ENCODE measurements at regions of chr13 and their contacts with region 1.

Region 1: DNA sequence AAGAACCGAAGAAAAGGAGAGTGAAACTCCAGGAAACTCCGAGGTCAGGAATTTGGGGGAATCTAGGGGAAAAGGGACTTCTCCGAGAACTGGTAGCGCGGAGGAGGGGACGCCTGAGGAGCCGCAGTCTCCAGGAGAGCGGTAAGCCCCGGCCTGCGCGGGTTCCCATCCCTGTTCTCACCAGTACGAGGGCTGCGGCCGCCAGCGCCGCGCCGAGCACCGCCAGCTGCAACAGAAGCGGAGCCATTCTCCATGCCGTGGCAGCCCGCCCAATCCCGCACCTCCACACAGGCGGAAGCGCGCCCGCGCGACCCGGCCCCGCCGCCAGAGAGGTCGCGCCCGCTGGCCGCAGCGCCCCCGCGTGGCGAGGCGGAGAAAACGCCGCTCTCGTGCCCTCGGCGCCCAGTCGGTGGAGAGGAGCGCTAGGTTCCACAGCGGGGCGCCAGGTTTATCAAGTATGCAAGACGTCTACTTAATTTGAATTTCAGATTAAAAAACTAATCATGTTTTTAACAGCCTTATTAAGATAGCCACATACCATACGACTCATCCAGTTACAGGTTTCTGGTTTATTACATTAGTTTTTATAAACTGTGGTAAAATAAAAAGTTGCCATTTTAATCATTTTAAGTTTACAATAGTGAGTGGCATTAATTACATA is at the start of gene ALG5:
- DNase-seq: peak; percentile 93 to 96
- ATAC-seq: peak; percentile 88 to 92 (median 90)
- H3K4me3 ChIP-seq: peak within 1 kb of the TSS; percentile 94
- H3K27ac ChIP-seq: peak within 1 kb of the TSS; percentile 86
- H3K4me1 ChIP-seq: peaks cover 19% of the 10 kb centered on the region
- H3K27me3 ChIP-seq: no peaks in the 10 kb centered on the region
- CTCF ChIP-seq: peak; percentile 98
- total RNA-seq, gene ALG5: 9.1 to 14.6 (median 11.0) TPM

Region 2: GRCh38 chr13:36530050-36530789 is 469.0 kb before region 1 on chr13:
- intact Hi-C with region 1: no loop called
- DNase-seq: no peak
- ATAC-seq: no peak
- H3K4me3 ChIP-seq: no peak overlapping the region
- H3K27ac ChIP-seq: no peak overlapping the region
- H3K4me1 ChIP-seq: no peaks in the 10 kb centered on the region
- H3K27me3 ChIP-seq: no peaks in the 10 kb centered on the region
- CTCF ChIP-seq: no peak

Region 3: GRCh38 chr13:36919833-36920615 is 79.2 kb before region 1 on chr13 and contains the start of gene SMAD9:
- intact Hi-C with region 1: loop called in 1 of 2 experiments (anchors 2 kb)
- DNase-seq: peak; percentile 86 to 87
- ATAC-seq: peak; percentile 75 to 82 (median 77)
- H3K4me3 ChIP-seq: peak within 1 kb of the TSS; percentile 84
- H3K27ac ChIP-seq: peak within 1 kb of the TSS; percentile 72
- H3K4me1 ChIP-seq: peaks cover 16% of the 10 kb centered on the region
- H3K27me3 ChIP-seq: no peaks in the 10 kb centered on the region
- CTCF ChIP-seq: no peak
- total RNA-seq, gene SMAD9: 1.3 to 33.5 (median 14.8) TPM

Region 4: GRCh38 chr13:37039896-37040295 is 40.7 kb after region 1 on chr13:
- intact Hi-C with region 1: loop called in 1 of 2 experiments (anchors 5 kb)
- DNase-seq: no peak
- ATAC-seq: no peak
- H3K4me3 ChIP-seq: no peak overlapping the region
- H3K27ac ChIP-seq: peak overlapping the region; percentile 44
- H3K4me1 ChIP-seq: peaks cover 3% of the 10 kb centered on the region
- H3K27me3 ChIP-seq: no peaks in the 10 kb centered on the region
- CTCF ChIP-seq: no peak